Heart right ventricle (tissue), 16 donors: ENCODE measurements at regions of chr15 and their contacts with region 1.

Region 1: GRCh38 chr15:92617549-92618520 is 37.7 kb downstream of the FAM174B start:
- DNase-seq: peak; percentile 59 to 66
- ATAC-seq: peak; percentile 62 to 96 (median 88)
- H3K4me3 ChIP-seq: no peak overlapping the region
- H3K27ac ChIP-seq: peak overlapping the region in 8 of 10 donors; percentile 30 to 65 (median 40)
- H3K4me1 ChIP-seq: peaks cover 8 to 39% (median 25%) of the 10 kb centered on the region in 9 donors
- H3K27me3 ChIP-seq: no peaks in the 10 kb centered on the region
- CTCF ChIP-seq: no peak

Region 2: DNA sequence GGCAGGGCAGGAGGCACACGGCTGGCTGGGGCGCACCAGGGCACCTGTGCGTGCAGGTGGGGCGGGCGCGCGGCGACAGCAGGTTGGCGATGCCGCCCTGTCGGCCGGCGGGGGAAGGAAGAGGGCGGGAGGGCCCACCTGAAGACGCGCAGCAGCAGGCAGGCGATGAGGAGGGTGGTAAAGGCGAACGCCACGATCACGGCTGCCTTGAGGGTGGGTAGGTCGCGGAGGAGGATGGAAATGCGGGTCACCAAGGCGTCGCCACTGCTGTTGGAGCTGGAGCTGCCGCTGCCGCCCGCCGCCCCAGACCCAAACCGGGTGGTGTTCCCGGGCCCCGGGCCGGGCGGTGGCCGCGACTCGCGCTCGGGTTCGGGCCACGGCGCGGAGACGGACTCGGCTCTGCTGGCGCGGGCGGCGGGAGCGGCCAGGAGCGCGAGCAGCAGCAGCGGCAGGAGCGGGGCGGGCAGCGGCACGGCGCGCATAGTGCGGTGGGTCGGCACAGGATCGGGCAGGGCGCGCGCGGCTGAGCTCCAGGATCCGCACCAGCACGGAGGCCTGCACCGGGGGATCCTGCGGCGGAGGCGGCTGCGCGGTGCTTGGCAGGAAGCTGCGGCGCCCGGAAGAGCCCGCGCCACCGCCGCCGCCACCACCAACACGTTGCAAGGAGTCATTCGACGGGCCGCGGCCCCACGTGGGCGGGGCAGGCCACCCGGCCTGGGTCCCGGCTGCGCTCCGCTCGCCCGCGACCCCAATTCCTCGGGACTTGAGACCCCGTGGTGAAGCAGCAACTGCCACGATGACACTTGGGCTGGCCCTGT is 37.6 kb after region 1 on chr15 and contains the start of gene FAM174B:
- intact Hi-C with region 1: loop called in 2 of 10 experiments (anchors 5 to 10 kb)
- DNase-seq: peak; percentile 21 to 57
- ATAC-seq: peak; percentile 57 to 84 (median 74)
- H3K4me3 ChIP-seq: peak within 1 kb of the TSS; percentile 40 to 71 (median 60)
- H3K27ac ChIP-seq: peak within 1 kb of the TSS in 4 of 10 donors; percentile 11 to 63 (median 56)
- H3K4me1 ChIP-seq: peaks cover 8 to 48% (median 16%) of the 10 kb centered on the region in 9 donors
- H3K27me3 ChIP-seq: peaks cover 0 to 35% (median 0%) of the 10 kb centered on the region in 7 donors
- CTCF ChIP-seq: no peak
- total RNA-seq, gene FAM174B: 7.7 to 16.9 (median 10.9) TPM

Region 3: DNA sequence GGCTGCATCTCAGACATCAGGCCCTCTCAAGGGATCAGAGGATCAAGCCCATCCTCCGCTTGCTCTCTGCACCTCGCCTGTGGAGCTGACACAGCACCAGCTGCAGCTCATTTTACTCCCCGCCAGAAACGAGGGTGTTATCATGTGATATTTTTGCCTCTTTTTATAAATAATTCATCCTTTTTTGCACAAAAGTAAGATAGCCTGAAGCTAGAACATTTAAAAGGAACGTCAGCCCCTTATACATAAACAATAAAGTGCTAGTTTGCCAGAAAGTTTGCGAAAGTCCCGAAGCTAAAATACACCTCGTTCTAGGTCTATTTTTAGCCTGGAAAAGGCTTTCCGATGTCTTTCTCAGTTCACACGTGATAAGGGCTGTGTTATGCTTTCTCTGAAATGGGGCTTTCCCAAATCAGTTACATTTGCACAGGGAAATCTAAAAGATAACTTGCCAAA is 47.3 kb after region 1 on chr15:
- intact Hi-C with region 1: loop called in 3 of 10 experiments (anchors 5 to 10 kb)
- DNase-seq: no peak
- ATAC-seq: peak in 7 of 8 donors; percentile 58 to 81 (median 63)
- H3K4me3 ChIP-seq: peak overlapping the region in 6 of 10 donors; percentile 7 to 28 (median 21)
- H3K27ac ChIP-seq: peak overlapping the region in 6 of 10 donors; percentile 23 to 65 (median 49)
- H3K4me1 ChIP-seq: peaks cover 8 to 46% (median 36%) of the 10 kb centered on the region in 9 donors
- H3K27me3 ChIP-seq: no peaks in the 10 kb centered on the region
- CTCF ChIP-seq: no peak

Region 4: GRCh38 chr15:92683232-92683834 is 65.5 kb after region 1 on chr15:
- intact Hi-C with region 1: loop called in 2 of 10 experiments (anchors 5 kb)
- DNase-seq: peak; percentile 28 to 46
- ATAC-seq: peak in 6 of 8 donors; percentile 41 to 82 (median 62)
- H3K4me3 ChIP-seq: no peak overlapping the region
- H3K27ac ChIP-seq: peak overlapping the region in 4 of 10 donors; percentile 2 to 79 (median 18)
- H3K4me1 ChIP-seq: peaks cover 0 to 32% (median 0%) of the 10 kb centered on the region in 9 donors
- H3K27me3 ChIP-seq: no peaks in the 10 kb centered on the region
- CTCF ChIP-seq: peak; percentile 57 to 78 (median 69)

Region 5: GRCh38 chr15:92705693-92706600 is 88.1 kb after region 1 on chr15:
- intact Hi-C with region 1: no loop called
- DNase-seq: no peak
- ATAC-seq: no peak
- H3K4me3 ChIP-seq: no peak overlapping the region
- H3K27ac ChIP-seq: no peak overlapping the region
- H3K4me1 ChIP-seq: no peaks in the 10 kb centered on the region
- H3K27me3 ChIP-seq: no peaks in the 10 kb centered on the region
- CTCF ChIP-seq: no peak